ENCODE measurements at regions of chr14 and their contacts with region 1.

Region 1: GRCh38 chr14:24114536-24115450 is at the starts of genes DCAF11 and NRL:
- DNase-seq: peak; percentile 98
- ATAC-seq: peak; percentile 86
- H3K4me3 Mint-ChIP-seq: peak within 1 kb of the TSS; percentile 99
- H3K27ac Mint-ChIP-seq: peak within 1 kb of the TSS; percentile 99
- H3K4me1 Mint-ChIP-seq: peaks cover 17% of the 10 kb centered on the region
- H3K27me3 Mint-ChIP-seq: peaks cover 4% of the 10 kb centered on the region; the same call in 1 of the 2 replicates
- CTCF ChIP-seq: no peak
- total RNA-seq, gene DCAF11: 73.6 to 90.2 TPM (median 77.3 TPM) in 3 replicates
- total RNA-seq, gene NRL: 1.3 to 2.3 TPM (median 1.6 TPM) in 3 replicates

Region 2: GRCh38 chr14:24080888-24081738 is 33.7 kb before region 1 on chr14:
- CTCF ChIA-PET with region 1: interaction called, 42 read pairs
- POLR2A ChIA-PET with region 1: interaction called, 6 read pairs
- DNase-seq: peak; percentile 69
- ATAC-seq: peak; percentile 76
- H3K4me3 Mint-ChIP-seq: peak overlapping the region; percentile 79
- H3K27ac Mint-ChIP-seq: peak overlapping the region; percentile 21
- H3K4me1 Mint-ChIP-seq: peaks cover 32% of the 10 kb centered on the region
- H3K27me3 Mint-ChIP-seq: peaks cover 26% of the 10 kb centered on the region
- CTCF ChIP-seq: no peak

Region 3: GRCh38 chr14:24093901-24094761 is 20.7 kb before region 1 on chr14 and contains the start of gene PCK2:
- CTCF ChIA-PET with region 1: interaction called, 170 read pairs
- POLR2A ChIA-PET with region 1: interaction called, 44 read pairs
- DNase-seq: peak; percentile 98
- ATAC-seq: peak; percentile 93
- H3K4me3 Mint-ChIP-seq: peak within 1 kb of the TSS; percentile 98
- H3K27ac Mint-ChIP-seq: peak within 1 kb of the TSS; percentile 98
- H3K4me1 Mint-ChIP-seq: peaks cover 32% of the 10 kb centered on the region
- H3K27me3 Mint-ChIP-seq: peaks cover 10% of the 10 kb centered on the region
- CTCF ChIP-seq: no peak
- total RNA-seq, gene PCK2: 51.2 to 67.0 TPM (median 59.2 TPM) in 3 replicates

Region 4: DNA sequence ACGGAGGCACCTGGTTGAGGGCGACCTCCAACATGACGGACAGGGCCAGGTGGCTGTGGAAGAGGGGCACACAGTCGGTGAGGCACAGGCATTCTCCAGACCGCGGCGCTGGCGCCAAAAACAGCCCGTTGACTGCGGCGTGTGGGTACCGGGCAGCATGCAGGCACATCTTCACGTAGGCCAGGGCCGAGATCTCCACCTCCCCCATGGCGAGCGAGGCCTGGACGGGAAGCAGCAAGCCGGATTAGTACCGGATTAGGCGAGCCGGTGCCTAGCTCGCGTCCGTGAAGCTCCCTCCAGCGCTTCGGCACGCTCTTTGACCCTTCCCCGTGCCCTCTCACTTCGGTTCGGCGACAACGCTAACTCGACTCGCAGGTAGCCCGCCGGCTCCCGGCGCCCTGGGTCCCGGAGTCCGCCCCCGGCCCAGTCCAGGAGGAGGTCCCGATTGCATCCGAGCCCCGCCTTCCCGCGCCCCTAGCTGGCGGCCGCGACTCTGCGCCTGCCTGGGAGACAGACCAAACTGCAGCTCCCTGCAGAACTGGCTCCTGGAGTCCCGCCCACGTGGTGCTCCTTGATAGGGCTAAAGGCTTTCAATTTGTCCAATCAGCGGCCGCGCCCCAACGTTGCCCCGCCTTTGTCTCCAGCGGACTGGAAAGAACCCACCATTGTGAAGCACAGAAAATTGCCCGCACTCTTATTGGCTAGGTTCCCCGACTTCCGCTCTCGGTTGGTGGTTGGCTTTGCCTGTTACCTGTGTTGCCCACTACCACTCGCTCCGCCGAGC is 26.5 kb after region 1 on chr14 and contains the start of gene EMC9:
- CTCF ChIA-PET with region 1: interaction called, 26 read pairs
- POLR2A ChIA-PET with region 1: interaction called, 24 read pairs
- DNase-seq: peak; percentile 100
- ATAC-seq: peak; percentile 89
- H3K4me3 Mint-ChIP-seq: peak within 1 kb of the TSS; percentile 95
- H3K27ac Mint-ChIP-seq: peak within 1 kb of the TSS; percentile 99
- H3K4me1 Mint-ChIP-seq: peaks cover 35% of the 10 kb centered on the region
- H3K27me3 Mint-ChIP-seq: no peaks in the 10 kb centered on the region
- CTCF ChIP-seq: no peak
- total RNA-seq, gene EMC9: 41.3 to 47.9 TPM (median 44.4 TPM) in 3 replicates

Measured in WTC11 (cell line).